GM10248 (cell line): ENCODE measurements at regions of chr4 and their contacts with region 1.

Region 1: GRCh38 chr4:70925899-70926635 is 23.9 kb downstream of the MOB1B start:
- DNase-seq: peak; percentile 49
- CTCF ChIP-seq: no peak

Region 2: DNA sequence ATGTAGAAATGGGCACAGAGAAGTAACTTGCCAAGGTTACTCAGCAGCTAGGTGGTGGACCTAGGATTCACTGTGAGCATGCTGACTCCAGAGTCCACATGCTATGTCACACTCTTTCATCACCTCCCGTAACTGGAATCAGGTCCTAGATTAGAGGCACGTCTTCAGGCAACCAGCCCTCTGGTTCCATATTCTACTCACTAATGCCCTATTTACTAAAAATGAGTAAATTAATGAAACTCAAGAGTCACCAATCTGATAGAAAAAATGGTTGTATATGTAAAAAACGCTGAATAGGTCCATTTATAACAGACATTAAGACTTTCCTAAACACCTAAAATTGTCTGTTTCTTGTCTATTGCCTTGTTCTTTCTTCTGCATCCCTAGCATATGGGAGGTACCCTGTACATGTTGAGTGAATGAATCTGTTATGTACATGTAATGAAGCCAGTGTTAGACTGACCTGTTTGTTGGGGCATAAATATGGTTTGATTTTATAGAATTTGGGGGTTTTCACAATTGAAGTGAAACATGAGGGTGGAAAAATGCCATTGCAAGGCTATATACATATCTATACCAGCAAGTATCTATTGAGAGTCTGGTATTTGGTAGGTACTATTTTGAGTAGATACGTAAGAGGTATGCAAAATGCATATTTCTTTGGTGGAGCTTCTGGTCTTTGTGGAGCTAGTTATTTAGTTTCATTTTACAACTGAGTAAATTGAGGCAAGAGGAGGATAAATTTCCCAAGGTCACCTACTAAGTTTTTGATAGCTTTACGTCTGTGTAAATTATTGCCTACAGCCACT is 211.8 kb before region 1 on chr4:
- CTCF ChIA-PET with region 1: no interaction called
- POLR2A ChIA-PET with region 1: interaction called, 10 read pairs
- DNase-seq: no peak
- CTCF ChIP-seq: no peak

Region 3: DNA sequence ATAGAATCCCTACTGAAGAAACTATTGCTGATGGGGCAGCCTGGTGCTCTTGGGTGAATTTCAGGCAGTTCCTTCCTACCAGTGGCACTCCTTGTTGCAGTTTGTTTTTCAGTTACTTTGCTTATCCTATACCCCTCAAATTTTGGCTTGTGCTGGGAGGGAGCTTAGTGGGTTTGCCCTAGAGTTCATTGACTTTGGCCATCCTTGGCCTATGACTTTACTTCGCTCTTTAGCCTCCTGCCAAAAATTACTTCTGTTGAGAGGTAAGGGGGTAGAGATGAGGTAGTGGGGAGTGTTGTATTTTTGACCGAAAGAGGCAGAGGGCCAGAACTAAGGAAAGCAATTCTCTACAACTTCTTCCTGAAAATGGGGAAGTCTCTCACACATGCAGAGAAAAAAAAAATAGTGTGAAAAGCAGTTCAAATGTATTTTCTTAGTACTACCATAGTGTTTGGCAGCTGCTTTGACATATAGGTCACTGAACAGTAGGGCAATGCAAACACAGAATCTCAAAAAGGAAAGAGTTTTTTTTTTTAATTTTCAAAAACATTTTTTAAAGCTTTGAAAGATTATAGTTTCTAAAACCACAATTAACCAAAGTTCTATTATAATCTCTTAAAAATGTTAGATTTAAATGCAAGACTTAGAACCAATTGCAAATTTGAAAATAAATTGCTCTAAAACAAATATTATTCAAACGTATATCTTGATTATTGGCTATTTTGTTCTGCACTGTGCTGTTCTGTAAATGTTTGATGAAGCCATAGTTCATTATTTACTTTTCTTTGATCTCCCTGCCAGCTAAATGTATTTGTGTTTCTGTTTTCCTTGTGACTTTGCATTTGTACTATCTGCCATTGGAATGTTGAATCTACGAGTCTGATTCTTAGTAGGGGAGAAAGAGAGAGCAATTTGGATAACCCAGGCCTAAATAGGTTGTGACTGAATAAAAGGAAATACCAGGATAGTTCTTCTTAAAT is 141.0 kb after region 1 on chr4:
- CTCF ChIA-PET with region 1: no interaction called
- POLR2A ChIA-PET with region 1: no interaction called
- DNase-seq: no peak
- CTCF ChIP-seq: no peak